Activated CD4-positive, alpha-beta T cell treated with anti-CD3 and anti-CD28 coated beads for 36 hours (primary cell): ENCODE measurements at regions of chr1 and their contacts with region 1.

Region 1: GRCh38 chr1:92831762-92832536 is at the start of gene RPL5:
- DNase-seq: peak; percentile 98
- ATAC-seq: peak; percentile 88
- H3K4me3 Mint-ChIP-seq: peak within 1 kb of the TSS; percentile 84
- H3K27ac Mint-ChIP-seq: peak within 1 kb of the TSS; percentile 95
- H3K4me1 Mint-ChIP-seq: peaks cover 35% of the 10 kb centered on the region
- H3K27me3 Mint-ChIP-seq: no peaks in the 10 kb centered on the region
- total RNA-seq, gene RPL5: 1,359 to 1,602 TPM

Region 2: GRCh38 chr1:91500756-91501522 is 1331.0 kb before region 1 on chr1 and contains the start of gene CDC7:
- CTCF ChIA-PET with region 1: no interaction called
- POLR2A ChIA-PET with region 1: no interaction called
- intact Hi-C with region 1: loop called in 1 of 2 experiments (anchors 10 kb)
- DNase-seq: peak; percentile 93
- ATAC-seq: peak; percentile 88
- H3K4me3 Mint-ChIP-seq: no peak within 1 kb of the TSS
- H3K27ac Mint-ChIP-seq: no peak within 1 kb of the TSS
- H3K4me1 Mint-ChIP-seq: peaks cover 25% of the 10 kb centered on the region
- H3K27me3 Mint-ChIP-seq: no peaks in the 10 kb centered on the region
- total RNA-seq, gene CDC7: 31.1 to 32.0 TPM

Region 3: DNA sequence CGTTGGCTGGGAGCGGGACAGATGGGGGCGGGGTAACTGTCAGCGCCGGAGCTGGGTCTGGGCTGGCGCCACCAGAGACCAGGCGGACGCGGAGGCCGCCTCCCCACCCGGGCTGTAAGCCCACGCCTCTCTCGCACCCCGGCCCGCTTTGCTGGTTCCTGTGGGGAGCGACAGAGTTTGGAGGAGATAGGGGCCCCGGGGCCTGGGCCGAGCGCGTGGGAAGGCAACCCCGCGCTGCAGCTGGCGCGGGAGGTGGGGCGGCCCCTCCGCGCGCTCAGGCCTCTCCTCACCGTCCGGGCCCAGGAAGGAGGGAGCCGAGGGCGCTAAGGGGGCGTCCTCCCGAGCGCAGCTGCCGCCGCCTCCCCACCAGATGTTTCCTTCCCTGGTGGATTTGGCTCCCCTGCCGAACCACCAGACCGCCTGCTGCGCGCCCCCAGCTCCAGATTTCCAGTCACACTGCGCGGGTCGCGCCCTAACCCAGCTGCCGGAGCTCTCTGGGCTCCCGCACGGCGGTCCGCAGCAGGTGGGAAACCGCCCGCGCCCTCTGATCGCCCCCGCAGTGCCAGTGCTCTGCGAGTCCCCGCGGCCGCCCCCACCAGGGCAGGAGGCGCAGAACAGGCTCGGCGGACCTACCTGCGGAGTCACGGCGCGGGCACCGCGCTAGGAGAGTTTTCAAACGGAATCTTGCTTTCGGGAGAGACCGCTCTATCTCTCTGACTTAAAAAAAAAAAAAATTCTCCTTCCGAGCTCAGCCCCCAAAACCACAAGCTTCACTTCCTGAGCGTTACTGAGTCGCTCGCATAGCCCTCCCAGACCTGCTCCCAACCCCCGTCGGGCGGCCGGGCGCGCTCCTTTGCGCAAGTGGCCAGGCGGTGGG is 346.3 kb before region 1 on chr1:
- CTCF ChIA-PET with region 1: no interaction called
- POLR2A ChIA-PET with region 1: no interaction called
- intact Hi-C with region 1: loop called (anchors 5 to 10 kb)
- DNase-seq: peak; percentile 95
- ATAC-seq: peak; percentile 58
- H3K4me3 Mint-ChIP-seq: peak overlapping the region; percentile 98
- H3K27ac Mint-ChIP-seq: peak overlapping the region; percentile 97
- H3K4me1 Mint-ChIP-seq: peaks cover 30% of the 10 kb centered on the region
- H3K27me3 Mint-ChIP-seq: no peaks in the 10 kb centered on the region

Region 4: GRCh38 chr1:92623187-92623778 is 208.7 kb before region 1 on chr1:
- CTCF ChIA-PET with region 1: no interaction called
- POLR2A ChIA-PET with region 1: no interaction called
- intact Hi-C with region 1: no loop called
- DNase-seq: no peak
- ATAC-seq: peak; percentile 57
- H3K4me3 Mint-ChIP-seq: no peak overlapping the region
- H3K27ac Mint-ChIP-seq: no peak overlapping the region
- H3K4me1 Mint-ChIP-seq: peaks cover 14% of the 10 kb centered on the region
- H3K27me3 Mint-ChIP-seq: no peaks in the 10 kb centered on the region

Region 5: GRCh38 chr1:92754000-92754718 is 77.8 kb before region 1 on chr1:
- CTCF ChIA-PET with region 1: interaction called, 10 read pairs
- POLR2A ChIA-PET with region 1: no interaction called
- intact Hi-C with region 1: loop called in 1 of 2 experiments (anchors 5 kb)
- DNase-seq: no peak
- ATAC-seq: no peak
- H3K4me3 Mint-ChIP-seq: no peak overlapping the region
- H3K27ac Mint-ChIP-seq: no peak overlapping the region
- H3K4me1 Mint-ChIP-seq: no peaks in the 10 kb centered on the region
- H3K27me3 Mint-ChIP-seq: no peaks in the 10 kb centered on the region

Region 6: DNA sequence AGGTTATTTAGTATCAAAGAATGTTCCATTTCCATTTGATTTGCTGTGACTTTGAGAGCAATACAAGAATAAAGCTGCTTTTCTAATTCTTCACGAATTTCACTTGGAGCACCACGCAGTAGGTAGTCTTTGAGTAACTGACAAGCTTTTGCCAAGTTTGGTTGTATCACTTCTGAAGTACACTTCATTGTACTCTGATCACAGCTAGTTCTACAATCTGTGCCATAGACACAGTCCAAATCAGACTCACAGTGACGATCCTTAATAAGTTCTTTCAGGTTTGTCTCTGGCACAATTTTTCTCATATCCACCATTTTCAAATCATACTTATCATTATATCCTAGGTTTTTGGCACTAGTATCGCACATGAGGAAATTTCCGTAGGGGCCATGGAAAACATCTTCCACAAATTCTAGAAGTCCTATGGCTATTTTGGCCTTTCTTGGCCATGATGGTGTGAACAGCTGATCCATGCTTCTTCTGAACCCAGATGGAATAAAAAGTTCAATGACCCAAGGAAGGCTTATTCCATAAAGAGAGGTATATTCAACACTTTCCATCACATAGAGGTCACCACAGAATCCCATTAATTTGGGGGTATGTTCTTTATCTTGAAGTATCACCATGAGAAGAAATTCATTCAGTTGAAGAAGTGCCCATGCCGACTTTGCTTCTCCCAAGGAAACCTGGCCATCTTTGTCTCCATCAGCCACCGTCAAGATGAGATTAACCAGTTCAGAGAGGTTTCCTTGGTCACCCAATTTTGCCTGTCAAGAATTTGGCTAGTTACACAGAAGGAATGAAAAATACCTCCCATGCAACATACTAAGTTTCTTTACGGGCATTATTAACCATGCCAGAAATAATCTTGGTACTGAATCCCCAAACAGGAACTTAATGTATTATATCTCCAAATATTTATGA is 11.7 kb after region 1 on chr1:
- CTCF ChIA-PET with region 1: interaction called, 22 read pairs
- POLR2A ChIA-PET with region 1: interaction called, 3 read pairs
- intact Hi-C with region 1: no loop called
- DNase-seq: no peak
- ATAC-seq: no peak
- H3K4me3 Mint-ChIP-seq: no peak overlapping the region
- H3K27ac Mint-ChIP-seq: peak overlapping the region; percentile 37
- H3K4me1 Mint-ChIP-seq: peaks cover 16% of the 10 kb centered on the region
- H3K27me3 Mint-ChIP-seq: no peaks in the 10 kb centered on the region

Region 7: DNA sequence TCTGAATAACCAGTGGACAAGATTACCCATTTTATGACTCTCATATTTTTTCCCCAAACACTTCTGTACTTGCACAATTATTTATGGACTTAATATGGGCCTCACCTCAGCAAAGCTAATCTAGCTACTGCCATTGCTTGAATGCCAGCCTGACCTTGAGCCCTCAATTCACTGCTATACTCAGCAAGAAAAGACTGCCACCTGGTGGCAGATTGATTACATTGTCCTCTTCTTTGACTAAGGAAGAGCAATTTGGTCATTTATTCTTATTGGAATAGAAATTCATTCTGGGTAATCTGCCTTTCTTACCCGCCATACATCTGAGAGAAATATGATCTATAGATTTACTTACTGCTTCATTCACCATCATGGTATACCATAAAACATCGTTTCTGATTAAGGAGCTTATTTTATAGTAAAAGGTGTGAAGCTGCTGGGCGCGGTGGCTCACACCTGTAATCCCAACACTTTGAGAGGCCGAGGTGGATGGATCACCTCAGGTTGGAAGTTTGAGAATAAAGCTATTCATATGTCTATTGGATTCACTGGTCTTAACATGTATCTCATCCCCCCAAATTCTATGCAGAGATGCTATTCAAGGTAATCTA is 162.3 kb after region 1 on chr1:
- CTCF ChIA-PET with region 1: interaction called, 11 read pairs
- POLR2A ChIA-PET with region 1: no interaction called
- intact Hi-C with region 1: no loop called
- DNase-seq: peak; percentile 79
- ATAC-seq: peak; percentile 83
- H3K4me3 Mint-ChIP-seq: no peak overlapping the region
- H3K27ac Mint-ChIP-seq: no peak overlapping the region
- H3K4me1 Mint-ChIP-seq: peaks cover 35% of the 10 kb centered on the region
- H3K27me3 Mint-ChIP-seq: no peaks in the 10 kb centered on the region

Region 8: DNA sequence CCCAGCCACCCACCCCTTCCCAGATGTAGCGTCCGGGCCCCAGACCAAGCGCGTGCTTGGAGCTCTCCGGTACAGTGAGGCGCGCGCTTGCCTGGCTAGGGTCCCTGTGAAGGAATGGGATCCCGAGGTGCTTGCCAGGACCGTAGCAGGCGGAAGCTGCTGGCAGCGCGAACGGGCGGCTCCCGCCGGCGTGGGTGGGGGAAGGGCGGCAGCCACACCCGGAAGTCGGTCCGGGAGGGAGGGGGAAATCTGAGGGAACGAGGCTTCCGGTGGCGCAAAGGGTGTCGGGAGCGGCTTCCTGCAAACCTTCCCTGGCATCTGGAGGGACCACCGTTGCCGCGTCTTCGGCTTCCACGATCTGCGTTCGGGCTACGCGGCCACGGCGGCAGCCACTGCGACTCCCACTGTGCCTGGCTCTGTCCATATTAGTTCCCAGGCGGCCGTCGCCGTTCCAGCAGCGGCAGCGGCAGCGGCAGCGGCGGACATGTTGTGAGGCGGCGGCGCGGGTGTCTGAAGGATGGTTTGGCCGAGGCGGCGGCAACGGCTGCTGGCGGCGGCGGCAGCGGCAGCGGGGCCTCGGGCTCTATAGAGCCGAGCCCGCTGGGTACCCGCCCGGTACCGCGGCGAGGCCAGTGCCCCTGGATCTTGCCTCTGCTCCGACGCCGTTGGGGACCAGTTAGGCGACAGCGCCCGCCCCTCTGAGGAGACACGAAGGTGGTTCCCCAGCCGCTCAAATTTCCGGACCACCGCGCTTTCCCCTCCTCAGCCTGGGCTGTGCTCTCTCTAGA is 513.9 kb after region 1 on chr1 and contains the start of gene DR1:
- CTCF ChIA-PET with region 1: no interaction called
- POLR2A ChIA-PET with region 1: no interaction called
- intact Hi-C with region 1: loop called (anchors 2 to 5 kb)
- DNase-seq: peak; percentile 96
- ATAC-seq: peak; percentile 78
- H3K4me3 Mint-ChIP-seq: peak within 1 kb of the TSS; percentile 97
- H3K27ac Mint-ChIP-seq: peak within 1 kb of the TSS; percentile 97
- H3K4me1 Mint-ChIP-seq: peaks cover 22% of the 10 kb centered on the region
- H3K27me3 Mint-ChIP-seq: no peaks in the 10 kb centered on the region
- total RNA-seq, gene DR1: 84.8 to 95.3 TPM